Activated CD8-positive, alpha-beta memory T cell treated with anti-CD3 and anti-CD28 coated beads, Interleukin-2, amount 10 ng/mL, durations not matched to agents 7 days and 5 days (primary cell): ENCODE measurements at regions of chr14 and their contacts with region 1.

Region 1: DNA sequence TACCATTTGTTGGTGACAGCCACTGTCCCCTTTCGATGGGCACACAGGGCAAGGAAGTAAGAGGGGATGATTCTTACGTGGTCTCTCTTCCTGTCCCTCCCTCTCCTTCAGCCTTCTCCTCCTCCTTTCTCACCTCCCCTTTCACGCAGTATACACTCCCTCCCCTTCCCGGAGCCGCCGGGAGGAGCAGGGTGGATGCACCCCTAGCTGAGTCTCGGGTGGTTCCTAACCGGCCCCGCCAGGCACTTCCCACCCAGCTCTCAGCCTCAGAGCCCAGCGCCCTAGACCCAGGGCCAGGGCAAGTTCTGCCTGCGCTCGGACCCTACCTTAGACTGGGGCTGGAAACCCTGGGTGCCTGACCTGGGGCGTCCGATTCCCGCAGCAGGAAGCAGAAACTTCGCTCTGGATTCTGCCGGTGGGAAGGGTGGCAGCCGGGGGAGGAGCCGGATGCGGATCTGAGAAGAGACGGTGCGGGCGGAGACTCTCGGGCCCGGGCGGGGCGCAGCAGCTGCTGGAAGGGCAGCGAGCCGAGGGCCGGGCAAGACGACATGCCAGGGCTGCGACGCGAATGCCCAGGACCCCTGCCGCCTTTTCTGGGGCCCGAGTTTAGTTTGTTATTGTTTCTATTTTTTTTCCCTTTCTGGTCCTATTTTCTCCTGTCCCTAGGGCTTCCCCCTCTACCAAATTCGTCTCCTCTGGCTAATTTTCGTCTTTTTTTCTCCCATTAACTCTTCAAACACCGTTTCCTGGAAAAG is at the start of gene TEP1:
- DNase-seq: peak; percentile 86
- ATAC-seq: peak; percentile 93
- H3K4me3 Mint-ChIP-seq: peak within 1 kb of the TSS; percentile 94
- H3K27ac Mint-ChIP-seq: peak within 1 kb of the TSS; percentile 97
- H3K4me1 Mint-ChIP-seq: peaks cover 37% of the 10 kb centered on the region
- H3K27me3 Mint-ChIP-seq: no peaks in the 10 kb centered on the region
- total RNA-seq, gene TEP1: 44.9 to 52.9 TPM

Region 2: DNA sequence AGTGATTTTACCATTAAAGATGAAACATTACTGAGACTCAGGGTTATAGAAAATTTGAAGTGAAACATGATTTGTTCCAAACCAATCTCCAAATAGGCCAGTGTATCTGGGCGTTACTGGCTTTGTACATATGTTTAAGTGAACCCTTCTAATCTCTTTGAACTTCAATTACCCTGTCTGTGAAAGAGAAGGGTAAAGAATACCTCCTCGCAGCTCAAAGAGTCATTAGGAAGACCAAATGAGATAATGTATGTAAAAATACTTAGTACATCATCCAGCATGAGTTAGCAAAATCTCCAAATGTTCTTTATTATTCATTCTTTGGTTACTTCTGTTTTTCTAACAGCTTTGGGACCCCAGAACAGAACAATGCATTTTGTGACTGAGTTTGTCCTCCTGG is 189.8 kb before region 1 on chr14 and contains the start of gene OR11H6:
- CTCF ChIA-PET with region 1: no interaction called
- DNase-seq: no peak
- ATAC-seq: no peak
- H3K4me3 Mint-ChIP-seq: no peak within 1 kb of the TSS
- H3K27ac Mint-ChIP-seq: no peak within 1 kb of the TSS
- H3K4me1 Mint-ChIP-seq: no peaks in the 10 kb centered on the region
- H3K27me3 Mint-ChIP-seq: no peaks in the 10 kb centered on the region
- total RNA-seq, gene OR11H6: not detected

Region 3: GRCh38 chr14:20343092-20343861 is 69.9 kb before region 1 on chr14 and contains the start of gene PARP2:
- CTCF ChIA-PET with region 1: interaction called, 25 read pairs
- DNase-seq: peak; percentile 98
- ATAC-seq: peak; percentile 93
- H3K4me3 Mint-ChIP-seq: peak within 1 kb of the TSS; percentile 83
- H3K27ac Mint-ChIP-seq: peak within 1 kb of the TSS; percentile 86
- H3K4me1 Mint-ChIP-seq: peaks cover 18% of the 10 kb centered on the region
- H3K27me3 Mint-ChIP-seq: no peaks in the 10 kb centered on the region
- total RNA-seq, gene PARP2: 32.6 to 38.4 TPM

Region 4: GRCh38 chr14:20427231-20428009 is 14.2 kb after region 1 on chr14:
- CTCF ChIA-PET with region 1: interaction called, 25 read pairs
- DNase-seq: peak; percentile 51
- ATAC-seq: peak; percentile 75
- H3K4me3 Mint-ChIP-seq: peak overlapping the region; percentile 47
- H3K27ac Mint-ChIP-seq: peak overlapping the region; percentile 86
- H3K4me1 Mint-ChIP-seq: peaks cover 26% of the 10 kb centered on the region
- H3K27me3 Mint-ChIP-seq: no peaks in the 10 kb centered on the region

Region 5: GRCh38 chr14:20454516-20455354 is 41.5 kb after region 1 on chr14 and contains the starts of genes APEX1 and OSGEP:
- CTCF ChIA-PET with region 1: interaction called, 38 read pairs
- DNase-seq: peak; percentile 99
- ATAC-seq: peak; percentile 89
- H3K4me3 Mint-ChIP-seq: no peak within 1 kb of the TSS
- H3K27ac Mint-ChIP-seq: no peak within 1 kb of the TSS
- H3K4me1 Mint-ChIP-seq: peaks cover 29% of the 10 kb centered on the region
- H3K27me3 Mint-ChIP-seq: no peaks in the 10 kb centered on the region
- total RNA-seq, gene APEX1: 112 to 179 TPM
- total RNA-seq, gene OSGEP: 42.8 to 53.0 TPM

Region 6: DNA sequence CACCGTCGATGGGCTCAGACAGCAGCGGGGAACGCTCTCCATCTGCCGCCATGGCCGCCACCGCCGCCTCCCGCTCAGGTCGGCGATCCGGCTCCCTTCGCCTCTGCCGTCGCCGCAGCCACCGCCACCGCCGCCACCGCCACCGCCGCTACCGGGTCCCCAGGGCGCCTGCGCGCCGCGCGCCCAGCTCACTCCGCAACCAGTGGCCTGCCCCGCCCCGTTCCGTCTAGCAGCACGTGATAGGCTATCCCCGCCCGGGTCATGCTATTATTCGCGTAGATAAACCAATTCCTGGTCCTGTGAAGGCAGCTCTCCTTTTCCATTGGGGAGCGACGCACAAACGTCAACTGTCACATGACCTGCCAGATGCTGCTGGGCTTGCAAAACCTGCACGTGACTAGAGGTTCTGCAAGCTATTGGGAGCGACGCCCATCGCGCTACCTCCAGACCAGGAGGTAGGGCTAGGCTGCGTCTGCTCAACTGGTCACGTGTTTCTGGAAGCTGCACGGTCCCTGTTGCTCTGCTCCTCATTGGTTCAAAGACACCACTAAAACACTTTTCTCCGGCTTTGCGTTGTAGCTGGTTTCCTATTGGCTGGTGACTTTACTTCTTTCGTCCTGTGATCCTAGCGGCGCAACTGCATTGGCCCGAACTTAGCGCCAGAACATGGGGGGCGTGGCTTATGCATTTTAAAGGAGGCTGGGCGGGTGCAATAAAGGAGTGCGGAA is 48.2 kb after region 1 on chr14 and contains the start of gene PIP4P1:
- CTCF ChIA-PET with region 1: interaction called, 38 read pairs
- DNase-seq: peak; percentile 100
- ATAC-seq: peak; percentile 96
- H3K4me3 Mint-ChIP-seq: peak within 1 kb of the TSS; percentile 92
- H3K27ac Mint-ChIP-seq: peak within 1 kb of the TSS; percentile 94
- H3K4me1 Mint-ChIP-seq: peaks cover 33% of the 10 kb centered on the region
- H3K27me3 Mint-ChIP-seq: no peaks in the 10 kb centered on the region
- total RNA-seq, gene PIP4P1: 30.9 to 31.7 TPM

Region 7: DNA sequence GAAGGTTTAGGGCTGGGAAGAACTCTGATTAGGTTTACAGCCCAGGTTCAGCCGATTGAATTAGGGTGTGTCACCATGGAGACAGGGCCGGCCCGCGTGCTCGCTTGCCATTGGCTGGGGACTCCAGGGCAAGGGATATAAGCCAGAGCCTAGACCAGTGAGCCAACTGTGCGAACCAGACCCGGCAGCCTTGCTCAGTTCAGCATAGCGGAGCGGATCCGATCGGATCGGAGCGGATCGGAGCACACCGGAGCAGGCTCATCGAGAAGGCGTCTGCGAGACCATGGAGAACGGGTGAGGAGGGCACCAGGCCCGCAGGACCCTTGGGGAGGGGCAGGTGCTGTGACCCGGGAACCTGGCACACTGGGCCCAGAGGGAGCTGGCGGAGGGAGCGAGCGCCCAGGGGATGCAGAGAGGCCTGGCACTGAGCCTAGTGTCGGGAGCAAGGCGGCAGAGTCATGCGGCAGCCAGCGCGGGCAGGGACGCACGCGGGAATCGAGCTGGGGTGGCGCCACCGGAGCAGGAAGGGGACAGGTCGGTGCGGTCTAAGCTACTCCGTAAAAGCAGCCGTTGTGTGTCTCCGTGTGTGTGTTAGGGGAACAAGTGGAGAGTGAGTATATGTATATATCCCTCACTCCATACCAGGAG is 56.1 kb after region 1 on chr14 and contains the start of gene PNP:
- CTCF ChIA-PET with region 1: interaction called, 10 read pairs
- DNase-seq: peak; percentile 94
- ATAC-seq: peak; percentile 93
- H3K4me3 Mint-ChIP-seq: peak within 1 kb of the TSS; percentile 98
- H3K27ac Mint-ChIP-seq: peak within 1 kb of the TSS; percentile 98
- H3K4me1 Mint-ChIP-seq: peaks cover 41% of the 10 kb centered on the region
- H3K27me3 Mint-ChIP-seq: no peaks in the 10 kb centered on the region
- total RNA-seq, gene PNP: 173 to 194 TPM

Region 8: GRCh38 chr14:20503898-20504297 is 90.7 kb after region 1 on chr14:
- CTCF ChIA-PET with region 1: no interaction called
- DNase-seq: no peak
- ATAC-seq: no peak
- H3K4me3 Mint-ChIP-seq: no peak overlapping the region
- H3K27ac Mint-ChIP-seq: no peak overlapping the region
- H3K4me1 Mint-ChIP-seq: peaks cover 4% of the 10 kb centered on the region
- H3K27me3 Mint-ChIP-seq: peaks cover 9% of the 10 kb centered on the region